ENCODE measurements at regions of chr4 and their contacts with region 1.

Region 1: DNA sequence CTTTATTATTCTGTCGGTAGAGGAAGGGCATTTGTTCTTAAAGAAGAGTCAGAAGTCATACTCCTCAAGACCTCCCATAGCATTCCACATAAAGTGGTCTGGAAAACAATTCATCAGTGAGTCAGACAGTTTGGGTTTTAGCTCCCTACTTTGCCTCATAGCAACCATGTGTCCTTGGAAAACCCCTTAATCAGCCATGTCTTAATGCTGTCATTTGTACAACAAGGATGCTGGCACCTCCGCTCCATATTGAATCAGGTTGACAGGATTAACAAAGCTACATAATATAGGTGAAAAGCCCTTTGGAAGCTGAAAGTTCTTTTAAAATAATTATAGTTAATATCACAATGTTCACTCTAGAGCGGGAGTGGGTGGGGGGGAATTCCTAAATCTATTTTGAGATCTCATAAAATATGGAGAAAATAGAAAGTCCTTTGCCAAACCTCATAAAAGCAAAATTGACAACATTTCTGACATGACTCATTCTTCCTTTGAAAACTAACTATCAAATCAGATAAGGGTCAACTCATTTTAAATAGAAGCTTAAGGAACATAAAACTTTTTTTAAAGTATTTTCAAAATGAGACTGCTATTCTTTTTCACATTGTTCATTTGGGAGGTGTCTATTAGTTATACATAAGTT is 37.3 kb upstream of the GUCY1A1 start:
- DNase-seq: no peak
- H3K4me3 Mint-ChIP-seq: no peak overlapping the region
- H3K27ac Mint-ChIP-seq: peak overlapping the region; percentile 64
- H3K4me1 Mint-ChIP-seq: peaks cover 25% of the 10 kb centered on the region
- H3K27me3 Mint-ChIP-seq: no peaks in the 10 kb centered on the region

Region 2: DNA sequence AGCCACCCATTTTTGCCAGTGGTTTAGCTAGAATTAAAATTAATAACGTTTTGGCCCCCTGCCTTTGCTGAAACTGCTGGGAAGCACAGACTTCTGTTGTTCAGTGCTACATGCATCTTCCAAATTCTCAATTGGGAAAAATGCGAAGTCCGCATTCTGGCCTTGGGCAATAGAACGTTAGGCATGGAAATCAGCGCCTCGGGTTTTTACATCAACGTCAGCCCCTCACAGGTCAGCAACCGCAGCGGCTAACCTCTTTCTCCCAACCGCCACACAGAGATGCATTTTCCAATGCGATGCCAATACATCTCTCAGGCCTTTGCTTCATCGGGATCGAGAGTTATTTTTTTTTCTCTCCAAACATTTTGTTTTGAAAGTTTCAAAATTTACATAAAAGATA is 1476.8 kb before region 1 on chr4:
- intact Hi-C with region 1: no loop called
- DNase-seq: no peak
- H3K4me3 Mint-ChIP-seq: no peak overlapping the region
- H3K27ac Mint-ChIP-seq: no peak overlapping the region
- H3K4me1 Mint-ChIP-seq: no peaks in the 10 kb centered on the region
- H3K27me3 Mint-ChIP-seq: no peaks in the 10 kb centered on the region

Region 3: GRCh38 chr4:155376387-155377268 is 252.7 kb before region 1 on chr4 and contains the start of gene MAP9:
- intact Hi-C with region 1: loop called (anchors 5 kb)
- DNase-seq: peak; percentile 82
- H3K4me3 Mint-ChIP-seq: peak within 1 kb of the TSS; percentile 82
- H3K27ac Mint-ChIP-seq: peak within 1 kb of the TSS; percentile 60
- H3K4me1 Mint-ChIP-seq: peaks cover 19% of the 10 kb centered on the region
- H3K27me3 Mint-ChIP-seq: peaks cover 4% of the 10 kb centered on the region
- total RNA-seq, gene MAP9: 5.9 and 6.2 TPM in 2 replicates

Region 4: DNA sequence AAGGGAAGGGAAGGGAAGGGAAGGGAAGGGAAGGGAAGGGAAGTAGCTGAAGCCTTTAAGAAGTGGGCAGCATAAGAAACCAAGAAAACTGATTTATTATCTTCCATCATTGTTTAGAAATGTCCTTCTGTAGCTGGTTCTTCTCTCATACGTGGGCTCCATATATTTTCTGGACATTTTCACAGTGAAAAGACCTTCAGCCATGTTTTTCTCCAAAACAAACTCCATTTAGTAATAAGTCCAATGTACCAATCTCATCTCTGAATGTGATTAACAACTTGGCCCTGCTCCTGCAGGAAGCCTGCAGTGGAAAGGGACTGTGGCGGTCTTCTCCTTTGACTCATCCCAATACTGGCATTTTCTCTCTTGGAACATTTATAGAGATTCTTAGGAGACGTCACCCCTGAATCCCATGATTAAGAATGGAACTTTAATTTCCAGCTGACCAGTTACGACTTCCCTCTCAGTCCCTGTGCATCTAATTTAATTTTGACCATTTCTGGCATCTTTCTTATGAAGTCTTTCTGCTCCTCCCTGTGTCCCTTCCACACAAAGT is 59.3 kb before region 1 on chr4:
- intact Hi-C with region 1: no loop called
- DNase-seq: no peak
- H3K4me3 Mint-ChIP-seq: no peak overlapping the region
- H3K27ac Mint-ChIP-seq: no peak overlapping the region
- H3K4me1 Mint-ChIP-seq: no peaks in the 10 kb centered on the region
- H3K27me3 Mint-ChIP-seq: no peaks in the 10 kb centered on the region

Region 5: GRCh38 chr4:155582971-155583437 is 46.3 kb before region 1 on chr4:
- intact Hi-C with region 1: loop called (anchors 1 kb)
- DNase-seq: no peak
- H3K4me3 Mint-ChIP-seq: peak overlapping the region; percentile 6
- H3K27ac Mint-ChIP-seq: peak overlapping the region; percentile 79
- H3K4me1 Mint-ChIP-seq: peaks cover 12% of the 10 kb centered on the region
- H3K27me3 Mint-ChIP-seq: peaks cover 3% of the 10 kb centered on the region

Region 6: DNA sequence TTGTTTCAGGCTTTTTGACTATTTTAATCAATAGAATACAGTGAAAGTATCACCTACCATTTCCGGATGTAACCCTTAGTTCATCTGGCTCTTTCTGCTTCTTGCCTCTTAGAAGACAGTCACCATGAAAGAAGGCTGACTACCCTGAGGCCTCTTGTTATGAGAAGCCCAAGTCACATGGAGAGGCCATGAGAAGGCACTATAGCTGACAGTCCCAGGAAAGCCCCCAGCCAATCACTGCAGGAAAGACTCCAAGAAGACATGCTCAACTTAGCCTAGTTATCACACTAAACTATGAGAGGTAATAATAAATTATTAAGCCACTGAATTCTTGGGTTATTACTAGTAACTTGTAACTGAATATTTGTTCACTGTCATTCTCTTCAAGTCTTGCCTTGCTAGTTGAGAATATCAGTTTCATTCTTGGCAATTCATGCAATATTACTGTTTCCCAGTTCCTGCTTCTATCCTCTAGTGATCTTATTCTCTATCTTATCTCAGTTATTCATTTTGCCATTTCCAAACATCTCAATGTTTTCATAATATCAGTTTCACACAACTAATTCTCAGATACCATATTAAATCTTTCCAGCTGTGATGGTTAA is 19.7 kb before region 1 on chr4:
- intact Hi-C with region 1: no loop called
- DNase-seq: no peak
- H3K4me3 Mint-ChIP-seq: no peak overlapping the region
- H3K27ac Mint-ChIP-seq: no peak overlapping the region
- H3K4me1 Mint-ChIP-seq: no peaks in the 10 kb centered on the region
- H3K27me3 Mint-ChIP-seq: peaks cover 10% of the 10 kb centered on the region

Region 7: DNA sequence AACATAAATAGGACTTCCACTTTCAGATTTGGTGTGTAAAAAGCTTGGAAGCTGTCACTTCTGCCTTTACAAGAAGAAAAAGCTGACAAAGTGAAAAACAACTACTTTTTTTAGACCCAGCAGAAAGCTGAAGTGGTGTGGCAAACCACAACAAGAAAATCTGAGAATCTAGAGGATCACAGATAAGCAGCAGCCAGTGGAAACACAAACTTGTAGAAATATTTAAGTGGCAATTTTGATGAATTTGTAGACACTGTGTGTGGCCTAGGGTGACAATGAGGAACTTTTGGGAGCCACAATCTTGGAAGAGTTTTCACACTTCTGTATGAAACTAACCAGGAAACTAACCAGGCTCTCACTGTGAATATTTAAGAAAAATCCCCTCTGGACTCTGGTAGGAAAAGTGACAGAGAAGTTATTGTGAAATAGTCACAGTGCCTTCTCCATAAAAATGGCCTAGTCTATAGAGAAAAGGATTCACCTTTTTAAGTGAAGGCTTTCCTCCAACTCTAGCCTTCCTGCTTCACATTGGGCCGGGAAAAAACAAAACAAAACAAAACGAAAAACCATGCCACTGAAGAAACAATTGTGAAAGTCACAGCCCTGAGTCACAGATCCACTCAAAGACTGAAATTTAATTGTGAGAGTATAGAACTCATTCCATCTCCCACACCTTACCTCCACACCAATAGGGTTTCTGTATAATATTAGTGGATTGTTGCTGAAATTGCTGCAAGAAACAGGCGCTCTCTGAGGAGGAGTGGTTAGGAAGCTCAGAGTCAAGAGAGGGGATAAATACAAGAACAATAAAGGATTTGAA is 10.6 kb after region 1 on chr4:
- intact Hi-C with region 1: loop called (anchors 1 kb)
- DNase-seq: peak; percentile 6
- H3K4me3 Mint-ChIP-seq: peak overlapping the region; percentile 50
- H3K27ac Mint-ChIP-seq: peak overlapping the region; percentile 79
- H3K4me1 Mint-ChIP-seq: peaks cover 21% of the 10 kb centered on the region
- H3K27me3 Mint-ChIP-seq: peaks cover 5% of the 10 kb centered on the region

Region 8: DNA sequence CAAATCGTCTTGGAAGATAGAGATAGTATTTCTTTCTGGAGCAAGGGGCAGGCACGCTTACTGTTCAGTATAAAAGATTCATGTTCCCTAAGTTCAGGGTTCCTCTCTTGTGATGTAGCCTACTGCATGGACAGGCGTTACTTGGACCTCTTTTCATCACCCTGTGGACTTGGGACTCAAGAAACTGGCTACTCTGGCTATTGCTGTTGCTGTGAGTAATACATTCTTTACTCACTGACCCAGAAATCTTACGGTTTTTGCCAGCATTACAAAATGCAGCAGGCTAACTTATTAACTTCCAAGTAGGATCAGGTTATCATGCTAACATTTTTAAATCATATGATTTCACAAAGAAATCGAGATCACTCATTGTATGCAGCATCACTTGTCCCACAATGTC is 116.7 kb after region 1 on chr4:
- intact Hi-C with region 1: no loop called
- DNase-seq: no peak
- H3K4me3 Mint-ChIP-seq: no peak overlapping the region
- H3K27ac Mint-ChIP-seq: no peak overlapping the region
- H3K4me1 Mint-ChIP-seq: no peaks in the 10 kb centered on the region
- H3K27me3 Mint-ChIP-seq: no peaks in the 10 kb centered on the region

Measured in activated T-helper 1 cell treated with anti-CD3 and anti-CD28 coated beads, Interleukin-12 subunit alpha, Interleukin-12 subunit beta, Interleukin-2, Interleukin-4 antibody, amounts not matched to agents 30 ng/mL and 10 ng/mL and 1 ng/mL, durations not matched to agents 14 hours and 24 hours and 36 hours (primary cell).